ENCODE measurements at regions of chr17 and their contacts with region 1.

Region 1: GRCh38 chr17:40219073-40219860 is at the start of gene WIPF2:
- DNase-seq: peak; percentile 100
- H3K4me3 Mint-ChIP-seq: peak within 1 kb of the TSS; percentile 78
- H3K27ac Mint-ChIP-seq: peak within 1 kb of the TSS; percentile 36
- H3K4me1 Mint-ChIP-seq: peaks cover 31% of the 10 kb centered on the region
- H3K27me3 Mint-ChIP-seq: no peaks in the 10 kb centered on the region
- CTCF ChIP-seq: no peak
- total RNA-seq, gene WIPF2: 327 and 376 TPM in 2 replicates

Region 2: DNA sequence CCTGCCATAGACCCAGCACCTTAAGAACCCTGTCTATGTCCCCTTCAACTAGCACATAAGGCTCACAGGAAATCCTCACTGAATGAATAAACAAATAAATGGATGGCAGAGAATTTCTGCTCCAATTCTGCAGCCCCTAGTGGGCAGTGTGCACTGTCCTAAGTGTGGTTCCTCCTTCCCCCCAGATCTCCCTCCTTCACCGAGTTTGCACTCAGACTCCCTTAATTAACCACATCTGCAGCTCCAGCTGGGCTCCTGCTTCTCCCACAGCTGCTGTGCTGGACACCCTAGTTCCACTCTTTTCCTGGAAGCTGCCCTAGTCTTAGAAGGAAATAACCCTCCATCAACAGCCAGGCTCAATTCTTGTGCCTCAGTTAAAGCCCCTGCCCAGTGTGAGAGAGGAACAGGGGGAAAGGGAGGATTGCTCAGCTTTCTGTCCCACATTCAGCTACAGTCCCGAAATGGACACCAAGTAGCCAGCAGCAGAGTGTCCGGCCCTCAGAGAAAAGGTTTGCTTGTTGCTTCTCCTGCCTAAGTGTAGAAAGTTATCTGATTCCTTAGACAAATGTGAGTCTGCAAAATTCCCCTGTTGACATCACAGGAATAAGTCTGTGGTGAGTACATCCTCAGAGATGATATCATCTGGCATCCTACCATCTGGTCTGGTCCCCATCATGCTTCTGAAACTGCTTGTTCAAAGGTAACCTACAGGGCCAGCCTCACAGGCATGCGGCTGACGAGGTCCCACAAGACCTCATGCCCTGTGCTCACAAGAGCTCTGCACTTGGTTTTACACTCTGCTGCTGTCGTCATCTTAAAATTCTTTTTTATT is 279.5 kb before region 1 on chr17:
- CTCF ChIA-PET with region 1: no interaction called
- intact Hi-C with region 1: no loop called
- DNase-seq: peak; percentile 76
- H3K4me3 Mint-ChIP-seq: no peak overlapping the region
- H3K27ac Mint-ChIP-seq: no peak overlapping the region
- H3K4me1 Mint-ChIP-seq: peaks cover 12% of the 10 kb centered on the region
- H3K27me3 Mint-ChIP-seq: peaks cover 63% of the 10 kb centered on the region
- CTCF ChIP-seq: no peak

Region 3: GRCh38 chr17:40068917-40069750 is 150.1 kb before region 1 on chr17:
- CTCF ChIA-PET with region 1: interaction called, 17 read pairs
- intact Hi-C with region 1: no loop called
- DNase-seq: peak; percentile 71
- H3K4me3 Mint-ChIP-seq: peak overlapping the region; percentile 63
- H3K27ac Mint-ChIP-seq: no peak overlapping the region
- H3K4me1 Mint-ChIP-seq: peaks cover 94% of the 10 kb centered on the region
- H3K27me3 Mint-ChIP-seq: no peaks in the 10 kb centered on the region
- CTCF ChIP-seq: no peak

Region 4: DNA sequence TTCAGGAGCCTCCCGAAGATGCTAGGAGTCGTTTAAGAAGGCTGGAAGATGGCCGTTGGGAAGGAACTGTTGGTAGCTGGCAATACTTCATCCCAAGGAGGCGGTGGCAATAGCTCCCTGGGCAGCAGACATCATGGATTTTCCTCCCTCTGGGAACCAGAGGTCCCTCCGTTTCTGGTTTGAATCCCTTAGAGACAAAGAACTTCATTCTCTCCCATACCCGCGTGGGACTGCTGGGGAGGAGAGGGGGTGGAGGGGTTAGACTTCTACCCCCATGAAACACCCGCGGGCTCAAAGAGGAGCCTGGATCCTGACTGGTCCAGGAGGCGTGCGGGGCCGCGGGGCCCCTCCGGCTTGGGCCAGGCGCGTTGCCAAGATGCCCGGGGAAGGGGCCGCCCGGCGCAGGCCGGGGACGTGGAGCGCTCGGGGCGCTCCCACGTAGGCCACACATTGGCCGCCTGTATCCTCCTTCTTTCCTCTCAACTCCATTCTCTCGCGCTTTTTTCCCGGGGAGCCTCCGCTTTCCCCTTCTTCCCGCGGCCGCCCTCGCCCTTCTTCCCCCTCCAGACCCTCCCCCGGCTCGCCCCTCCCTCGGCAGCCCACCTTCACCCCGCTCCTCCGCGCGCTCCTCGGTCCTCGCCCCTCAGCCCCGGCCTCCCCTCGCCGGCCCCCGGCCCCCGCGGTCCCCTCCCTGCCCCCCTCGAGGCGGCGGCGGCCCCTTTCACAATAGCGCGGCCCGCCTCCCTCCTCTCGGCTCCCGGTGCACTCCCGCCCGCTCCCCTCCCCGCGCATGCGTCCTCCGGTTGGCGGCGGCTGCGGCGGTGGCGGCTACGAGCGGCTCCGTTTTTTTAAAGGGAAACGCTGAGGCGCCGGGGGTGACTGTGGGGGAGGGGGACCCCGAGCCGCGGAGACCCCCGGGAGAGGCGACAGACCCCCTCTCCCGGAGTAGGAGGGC is 97.8 kb before region 1 on chr17 and contains the start of gene MSL1:
- CTCF ChIA-PET with region 1: interaction called, 69 read pairs
- intact Hi-C with region 1: no loop called
- DNase-seq: peak; percentile 100
- H3K4me3 Mint-ChIP-seq: peak within 1 kb of the TSS; percentile 86
- H3K27ac Mint-ChIP-seq: peak within 1 kb of the TSS; percentile 53
- H3K4me1 Mint-ChIP-seq: peaks cover 48% of the 10 kb centered on the region
- H3K27me3 Mint-ChIP-seq: no peaks in the 10 kb centered on the region
- CTCF ChIP-seq: no peak
- total RNA-seq, gene MSL1: 505 and 524 TPM in 2 replicates

Region 5: DNA sequence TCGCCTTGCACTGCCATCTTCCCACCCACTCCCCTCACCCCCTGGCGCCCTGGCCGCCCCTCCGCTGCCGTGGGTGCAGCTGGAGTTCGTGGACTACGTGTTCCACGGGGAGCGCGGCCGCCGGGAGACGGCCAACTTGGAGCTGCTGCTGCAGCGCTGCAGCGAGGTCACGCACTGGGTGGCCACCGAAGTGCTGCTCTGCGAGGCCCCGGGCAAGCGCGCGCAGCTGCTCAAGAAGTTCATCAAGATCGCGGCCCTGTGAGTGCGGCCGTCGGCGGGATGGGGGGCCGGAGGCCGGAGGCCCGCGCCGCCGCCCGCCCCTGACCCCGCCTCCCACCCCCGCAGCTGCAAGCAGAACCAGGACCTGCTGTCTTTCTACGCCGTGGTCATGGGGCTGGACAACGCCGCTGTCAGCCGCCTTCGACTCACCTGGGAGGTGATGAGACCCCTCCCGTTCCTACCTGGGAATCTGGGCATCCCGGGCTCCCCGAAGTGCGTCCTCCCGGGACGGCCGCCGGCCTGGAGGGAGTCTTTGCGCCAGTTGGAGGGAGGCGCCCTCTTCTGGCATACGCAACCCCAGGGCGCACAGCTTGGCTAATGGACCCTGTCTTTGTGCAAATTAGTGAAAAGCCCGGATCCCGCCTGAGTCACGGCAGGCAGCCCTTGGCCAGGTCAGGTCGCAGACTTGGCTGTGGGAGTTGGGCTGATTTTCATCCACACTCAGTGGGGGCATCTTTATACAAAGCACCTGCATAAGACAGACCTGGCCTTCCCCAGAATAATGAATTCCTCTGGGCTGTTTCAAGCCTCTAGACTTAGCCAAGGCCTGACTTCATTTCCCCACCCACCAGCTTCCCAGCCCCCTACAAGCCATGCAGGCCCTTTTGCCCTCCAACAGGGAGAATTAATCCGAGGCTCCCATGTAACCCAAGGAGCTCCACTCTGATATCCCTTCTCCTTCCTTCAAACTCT is 27.7 kb before region 1 on chr17:
- CTCF ChIA-PET with region 1: interaction called, 116 read pairs
- intact Hi-C with region 1: no loop called
- DNase-seq: no peak
- H3K4me3 Mint-ChIP-seq: no peak overlapping the region
- H3K27ac Mint-ChIP-seq: no peak overlapping the region
- H3K4me1 Mint-ChIP-seq: no peaks in the 10 kb centered on the region
- H3K27me3 Mint-ChIP-seq: no peaks in the 10 kb centered on the region
- CTCF ChIP-seq: no peak

Region 6: GRCh38 chr17:40242774-40243173 is 23.5 kb after region 1 on chr17:
- CTCF ChIA-PET with region 1: interaction called, 47 read pairs
- intact Hi-C with region 1: no loop called
- DNase-seq: no peak
- H3K4me3 Mint-ChIP-seq: no peak overlapping the region
- H3K27ac Mint-ChIP-seq: no peak overlapping the region
- H3K4me1 Mint-ChIP-seq: peaks cover 32% of the 10 kb centered on the region
- H3K27me3 Mint-ChIP-seq: no peaks in the 10 kb centered on the region
- CTCF ChIP-seq: no peak

Region 7: GRCh38 chr17:40317880-40318829 is 98.9 kb after region 1 on chr17:
- CTCF ChIA-PET with region 1: interaction called, 17 read pairs
- intact Hi-C with region 1: no loop called
- DNase-seq: peak; percentile 100
- H3K4me3 Mint-ChIP-seq: peak overlapping the region; percentile 89
- H3K27ac Mint-ChIP-seq: peak overlapping the region; percentile 71
- H3K4me1 Mint-ChIP-seq: peaks cover 45% of the 10 kb centered on the region
- H3K27me3 Mint-ChIP-seq: no peaks in the 10 kb centered on the region
- CTCF ChIP-seq: no peak